Sciatic nerve (tissue), 2 donors: ENCODE measurements at regions of chr3 and their contacts with region 1.

Region 1: GRCh38 chr3:124761250-124761796 is 31.1 kb downstream of the UMPS start:
- DNase-seq: peak; percentile 95
- ATAC-seq: peak; percentile 93

Region 2: GRCh38 chr3:124905849-124906248 is 144.5 kb after region 1 on chr3:
- intact Hi-C with region 1: loop called (anchors 2 kb)
- DNase-seq: no peak
- ATAC-seq: no peak